ENCODE measurements at regions of chr6 and their contacts with region 1.

Region 1: GRCh38 chr6:41027799-41028628 is 11.0 kb downstream of the UNC5CL start:
- DNase-seq: peak; percentile 91
- CTCF ChIP-seq: peak; percentile 99

Region 2: DNA sequence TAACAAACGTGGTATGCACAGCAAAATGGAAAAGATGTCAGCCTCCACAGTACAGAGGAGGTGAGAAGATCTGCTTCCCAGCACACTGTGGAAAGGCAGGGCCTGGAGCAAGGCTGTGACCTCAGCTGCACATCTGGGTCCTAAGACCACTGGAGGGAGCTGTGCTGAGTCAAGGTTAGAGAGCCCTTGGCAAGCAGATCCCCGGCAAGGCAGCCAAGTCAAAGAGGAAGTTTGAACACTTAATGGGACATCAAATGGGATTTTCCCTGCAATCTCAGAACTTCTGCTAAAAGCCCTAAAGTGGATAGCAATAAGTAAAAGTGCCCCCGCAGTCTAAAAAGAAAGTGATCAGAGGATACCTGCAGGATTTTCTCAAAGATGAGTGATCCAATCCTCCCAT is 28.4 kb before region 1 on chr6:
- CTCF ChIA-PET with region 1: interaction called, 44 read pairs
- POLR2A ChIA-PET with region 1: no interaction called
- DNase-seq: peak; percentile 59
- CTCF ChIP-seq: peak; percentile 25

Region 3: GRCh38 chr6:41013466-41014153 is 14.4 kb before region 1 on chr6:
- CTCF ChIA-PET with region 1: interaction called, 59 read pairs
- POLR2A ChIA-PET with region 1: interaction called, 3 read pairs
- DNase-seq: no peak
- CTCF ChIP-seq: no peak

Region 4: GRCh38 chr6:41039060-41039998 is 11.3 kb after region 1 on chr6 and contains the start of gene UNC5CL:
- CTCF ChIA-PET with region 1: interaction called, 169 read pairs
- POLR2A ChIA-PET with region 1: no interaction called
- DNase-seq: peak; percentile 76
- CTCF ChIP-seq: peak; percentile 82

Region 5: GRCh38 chr6:41051873-41052272 is 23.9 kb after region 1 on chr6:
- CTCF ChIA-PET with region 1: interaction called, 169 read pairs
- POLR2A ChIA-PET with region 1: no interaction called
- DNase-seq: no peak
- CTCF ChIP-seq: no peak

Region 6: GRCh38 chr6:41072676-41073623 is 44.9 kb after region 1 on chr6 and contains the start of gene NFYA:
- CTCF ChIA-PET with region 1: interaction called, 10 read pairs
- POLR2A ChIA-PET with region 1: no interaction called
- DNase-seq: peak; percentile 96
- CTCF ChIP-seq: peak; percentile 28

Region 7: GRCh38 chr6:41159415-41160082 is 131.5 kb after region 1 on chr6:
- CTCF ChIA-PET with region 1: no interaction called
- POLR2A ChIA-PET with region 1: no interaction called
- DNase-seq: no peak
- CTCF ChIP-seq: no peak